ENCODE measurements at regions of chr17 and their contacts with region 1.

Region 1: DNA sequence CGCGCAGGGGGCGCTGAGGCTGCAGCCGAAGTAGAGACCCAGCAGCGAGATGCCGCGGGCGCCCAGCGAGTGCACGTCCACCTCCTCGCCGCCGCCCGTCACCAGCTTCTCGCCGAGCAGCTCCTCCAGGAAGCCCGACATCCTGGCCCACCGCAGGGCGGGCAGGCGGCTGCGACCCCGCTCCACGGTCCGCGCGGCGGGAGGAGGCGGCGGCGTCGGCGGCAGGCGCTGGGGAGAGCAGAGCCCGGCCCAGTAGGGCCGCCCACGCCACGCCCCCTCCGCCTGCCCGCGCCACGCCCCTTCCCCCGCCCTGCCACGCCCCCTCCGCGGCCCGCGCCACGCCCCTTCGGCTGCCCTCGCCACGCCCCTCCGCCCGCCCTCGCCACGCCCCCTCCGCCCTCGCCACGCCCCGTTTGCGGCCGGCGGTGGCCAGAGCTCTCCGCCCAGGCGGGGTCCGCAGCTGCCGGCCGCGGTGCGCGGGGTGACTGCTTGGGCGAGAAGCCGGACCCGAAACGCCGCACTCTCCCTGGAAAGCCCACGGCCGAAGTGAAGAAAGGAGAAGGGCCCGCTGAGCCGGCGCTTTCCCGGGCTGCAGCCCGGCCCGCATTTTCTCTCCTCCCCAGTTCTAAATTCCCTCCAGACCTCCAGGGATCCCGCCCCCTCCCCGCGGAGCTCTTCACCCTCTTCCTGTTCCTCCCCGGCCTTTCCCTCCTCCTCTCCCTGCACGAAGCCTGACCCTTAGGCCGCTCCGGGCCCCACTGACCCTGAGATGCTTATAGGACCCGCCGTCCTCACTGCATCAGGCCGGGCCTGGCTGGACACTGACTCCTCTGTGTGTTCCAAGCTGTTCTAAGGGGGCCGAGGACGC is at the start of gene NXN:
- DNase-seq: peak; percentile 99
- CTCF ChIP-seq: no peak

Region 2: DNA sequence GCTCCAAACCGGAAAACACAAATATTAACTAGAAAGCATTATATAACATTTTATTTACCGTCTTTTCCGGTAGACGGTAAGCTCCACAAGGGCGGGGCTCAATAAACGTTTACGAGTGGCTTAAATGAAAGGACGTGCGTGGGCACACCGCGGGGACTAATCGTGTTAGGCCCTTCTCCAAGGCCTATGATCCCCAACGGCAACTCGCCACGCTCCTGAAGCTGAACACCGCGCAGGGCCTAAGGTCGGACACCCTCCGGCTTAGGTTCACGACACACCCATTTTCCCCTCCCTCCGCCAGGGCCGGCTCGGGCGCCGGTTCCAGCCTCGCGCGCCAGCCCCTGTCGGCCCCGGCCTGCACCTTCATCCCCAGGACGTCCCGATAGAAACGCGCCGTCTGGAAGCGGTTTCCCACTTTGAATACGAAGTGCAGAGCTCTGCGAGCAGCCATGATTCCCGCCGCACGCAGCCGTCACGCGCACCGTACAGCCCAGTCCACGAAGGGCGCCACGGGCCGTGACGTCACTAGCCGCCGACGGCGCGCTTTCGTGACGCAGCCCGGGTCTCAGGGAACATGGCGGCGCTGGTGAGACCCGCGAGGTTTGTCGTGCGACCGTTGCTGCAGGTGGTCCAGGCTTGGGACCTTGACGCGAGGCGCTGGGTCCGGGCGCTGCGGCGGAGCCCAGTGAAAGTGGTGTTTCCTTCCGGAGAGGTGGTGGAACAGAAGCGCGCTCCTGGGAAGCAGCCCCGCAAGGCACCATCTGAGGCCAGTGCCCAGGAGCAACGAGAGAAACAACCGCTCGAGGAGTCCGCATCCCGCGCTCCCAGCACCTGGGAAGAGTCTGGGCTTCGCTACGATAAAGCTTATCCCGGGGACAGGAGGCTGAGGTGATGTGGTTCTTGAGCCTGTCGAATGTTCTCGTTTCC is 197.7 kb before region 1 on chr17 and contains the starts of genes GLOD4 and MRM3:
- in situ Hi-C with region 1: loop called (anchors 10 kb)
- DNase-seq: peak; percentile 98
- CTCF ChIP-seq: no peak

Region 3: DNA sequence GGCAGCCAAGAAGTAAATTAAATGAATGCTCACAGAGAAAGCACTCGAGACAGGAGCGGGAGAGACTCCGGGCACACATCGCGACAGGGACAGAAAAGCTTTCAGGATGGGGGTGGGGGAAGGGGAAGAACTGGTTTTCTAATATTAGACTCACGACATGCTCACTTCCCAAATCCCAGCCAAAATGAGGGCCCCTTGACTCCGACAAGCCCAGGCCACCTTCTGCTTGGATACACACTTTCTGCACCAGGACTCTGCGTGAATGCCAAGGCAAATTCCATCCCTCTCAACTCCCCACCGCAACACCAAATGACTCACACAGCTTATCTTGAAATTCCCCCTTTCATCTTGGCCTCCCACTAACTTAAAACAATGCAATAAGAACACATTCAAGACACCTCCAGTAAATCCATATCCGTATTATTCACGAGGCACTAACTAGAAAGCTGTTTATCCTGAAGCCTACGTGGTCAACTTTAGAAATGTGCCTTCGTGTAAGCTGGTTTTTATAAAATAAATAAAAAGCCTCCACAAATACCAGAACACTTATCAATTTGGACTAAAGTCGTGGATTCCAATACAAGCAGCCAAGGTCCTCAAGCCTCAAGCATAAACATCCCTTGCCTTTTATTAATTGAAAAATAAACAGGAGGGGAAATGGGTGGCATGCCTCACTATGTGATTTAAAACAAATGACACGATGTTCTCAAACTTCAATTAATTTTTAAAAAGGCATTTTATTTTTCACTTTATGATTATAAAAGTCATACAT is 46.3 kb before region 1 on chr17:
- in situ Hi-C with region 1: no loop called
- DNase-seq: no peak
- CTCF ChIP-seq: no peak